ENCODE measurements at regions of chrX and their contacts with region 1.

Region 1: DNA sequence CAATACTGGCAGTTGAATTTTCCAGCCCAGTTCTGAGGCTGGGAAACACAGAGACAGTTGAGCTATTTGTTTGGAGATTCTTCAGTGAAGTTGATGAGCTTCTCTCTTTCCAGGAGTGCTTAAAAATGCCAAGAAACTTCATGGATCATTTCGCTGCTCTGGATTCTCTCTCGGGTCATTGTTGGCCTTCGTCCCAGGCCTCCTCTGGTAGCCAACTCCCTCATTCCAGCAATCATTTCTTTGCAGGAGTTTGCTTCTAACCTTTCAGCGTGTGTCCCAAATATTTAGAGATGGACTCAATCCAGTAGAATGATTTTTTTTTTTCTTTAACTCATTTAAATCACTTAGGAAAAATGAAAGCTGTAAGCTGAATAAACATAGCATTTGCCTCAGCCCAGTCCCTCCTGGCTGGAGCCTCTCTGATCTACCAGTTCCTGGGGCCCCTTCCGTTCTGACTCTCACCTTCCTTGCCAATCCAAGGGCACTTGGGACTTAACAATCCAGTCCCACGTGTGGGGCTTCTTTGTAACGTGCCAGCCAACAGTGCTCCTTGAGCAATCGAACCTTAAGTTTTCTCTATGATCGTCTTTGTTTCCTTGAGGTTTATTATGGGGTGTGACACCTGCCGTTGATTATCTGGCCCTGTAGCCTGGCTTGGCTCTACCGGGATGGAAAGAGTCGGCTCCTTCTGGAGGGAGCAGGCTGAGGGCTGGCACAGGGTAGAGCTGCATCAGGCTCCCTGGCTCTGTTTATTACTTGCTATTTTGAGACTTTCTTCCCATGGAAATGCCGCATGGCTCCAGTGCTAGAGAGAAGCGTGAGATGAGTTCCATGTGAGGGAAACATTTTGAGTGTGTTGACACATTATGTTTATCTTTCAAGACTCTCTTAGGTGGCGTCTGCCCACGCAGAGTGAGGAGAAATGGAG is 80.4 kb upstream of the GPC4 start:
- DNase-seq: peak; percentile 89
- H3K4me3 ChIP-seq: peak overlapping the region in 3 of 4 donors; percentile 5 to 23 (median 10)
- H3K27ac ChIP-seq: peak overlapping the region; percentile 72 to 79 (median 78)
- H3K4me1 ChIP-seq: peaks cover 0 to 29% (median 5%) of the 10 kb centered on the region in 4 donors
- H3K27me3 ChIP-seq: no peaks in the 10 kb centered on the region
- CTCF ChIP-seq: no peak
- EP300 ChIP-seq: no peak
- POLR2A ChIP-seq: no peak

Region 2: GRCh38 chrX:133249266-133250058 is 246.3 kb before region 1 on chrX:
- intact Hi-C with region 1: loop called (anchors 5 kb)
- DNase-seq: no peak
- H3K4me3 ChIP-seq: no peak overlapping the region
- H3K27ac ChIP-seq: peak overlapping the region in 3 of 4 donors; percentile 69
- H3K4me1 ChIP-seq: peaks cover 0 to 17% (median 6%) of the 10 kb centered on the region in 4 donors
- H3K27me3 ChIP-seq: no peaks in the 10 kb centered on the region
- CTCF ChIP-seq: no peak
- EP300 ChIP-seq: no peak
- POLR2A ChIP-seq: no peak

Region 3: GRCh38 chrX:133314281-133314680 is 181.4 kb before region 1 on chrX:
- intact Hi-C with region 1: loop called (anchors 5 kb)
- DNase-seq: no peak
- H3K4me3 ChIP-seq: no peak overlapping the region
- H3K27ac ChIP-seq: peak overlapping the region in 3 of 4 donors; percentile 42 to 53 (median 47)
- H3K4me1 ChIP-seq: peaks cover 0 to 23% (median 10%) of the 10 kb centered on the region in 4 donors
- H3K27me3 ChIP-seq: no peaks in the 10 kb centered on the region
- CTCF ChIP-seq: no peak
- EP300 ChIP-seq: no peak
- POLR2A ChIP-seq: no peak

Region 4: GRCh38 chrX:133325422-133325821 is 170.3 kb before region 1 on chrX:
- intact Hi-C with region 1: loop called (anchors 5 kb)
- DNase-seq: no peak
- H3K4me3 ChIP-seq: no peak overlapping the region
- H3K27ac ChIP-seq: peak overlapping the region; percentile 26 to 57 (median 29)
- H3K4me1 ChIP-seq: peaks cover 0 to 62% (median 22%) of the 10 kb centered on the region in 4 donors
- H3K27me3 ChIP-seq: no peaks in the 10 kb centered on the region
- CTCF ChIP-seq: no peak
- EP300 ChIP-seq: no peak
- POLR2A ChIP-seq: no peak

Region 5: DNA sequence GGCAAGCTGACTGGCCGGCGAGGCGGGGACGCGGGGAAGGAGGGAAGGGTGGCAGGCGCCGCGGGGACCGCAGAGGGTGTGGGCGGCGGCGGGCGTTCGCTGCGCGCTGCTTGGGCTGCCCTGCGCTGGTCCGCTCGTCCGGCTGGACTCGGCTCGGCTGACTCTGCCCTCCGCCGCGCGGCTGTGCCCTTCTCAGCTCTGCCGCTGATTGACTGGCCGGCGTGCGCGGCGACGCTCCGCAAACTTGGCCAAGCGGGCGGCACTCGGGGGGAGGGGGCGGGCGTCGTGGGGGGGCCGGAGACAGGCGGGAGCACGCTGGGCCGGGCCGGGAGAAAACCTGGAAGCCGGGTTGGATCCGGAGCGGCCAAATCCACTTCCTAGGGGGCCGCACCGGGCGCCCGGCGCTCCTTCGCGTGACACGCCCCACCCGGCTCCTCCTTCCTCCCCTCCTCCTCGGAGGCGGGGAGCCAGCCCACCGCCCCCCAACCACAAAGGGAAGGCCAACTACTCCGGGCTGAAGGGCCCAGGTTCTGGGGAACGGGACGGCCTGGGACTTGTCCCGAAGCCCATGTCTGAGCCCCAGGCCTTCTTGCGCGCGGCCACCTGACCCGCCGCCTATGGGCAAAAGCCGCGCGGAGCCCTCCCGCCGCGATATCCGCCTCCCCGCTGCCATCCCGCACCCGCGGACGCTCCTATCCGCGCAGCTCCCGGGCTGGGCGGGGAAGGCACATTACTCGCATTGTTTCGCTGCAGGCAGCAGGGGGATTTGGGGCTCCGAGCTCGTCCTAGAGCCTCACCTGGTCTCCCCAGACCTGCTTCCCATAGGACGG is 80.2 kb before region 1 on chrX and contains the start of gene GPC4:
- intact Hi-C with region 1: loop called (anchors 5 kb)
- DNase-seq: peak; percentile 91
- H3K4me3 ChIP-seq: peak within 1 kb of the TSS; percentile 68 to 77 (median 72)
- H3K27ac ChIP-seq: peak within 1 kb of the TSS; percentile 85 to 89 (median 87)
- H3K4me1 ChIP-seq: peaks cover 0 to 18% (median 9%) of the 10 kb centered on the region in 4 donors
- H3K27me3 ChIP-seq: peaks cover 0 to 4% (median 0%) of the 10 kb centered on the region in 3 donors
- CTCF ChIP-seq: no peak
- EP300 ChIP-seq: no peak
- POLR2A ChIP-seq: peak in 1 of 2 donors; percentile 44
- total RNA-seq, gene GPC4: 25.3 to 45.7 (median 28.1) TPM

Region 6: DNA sequence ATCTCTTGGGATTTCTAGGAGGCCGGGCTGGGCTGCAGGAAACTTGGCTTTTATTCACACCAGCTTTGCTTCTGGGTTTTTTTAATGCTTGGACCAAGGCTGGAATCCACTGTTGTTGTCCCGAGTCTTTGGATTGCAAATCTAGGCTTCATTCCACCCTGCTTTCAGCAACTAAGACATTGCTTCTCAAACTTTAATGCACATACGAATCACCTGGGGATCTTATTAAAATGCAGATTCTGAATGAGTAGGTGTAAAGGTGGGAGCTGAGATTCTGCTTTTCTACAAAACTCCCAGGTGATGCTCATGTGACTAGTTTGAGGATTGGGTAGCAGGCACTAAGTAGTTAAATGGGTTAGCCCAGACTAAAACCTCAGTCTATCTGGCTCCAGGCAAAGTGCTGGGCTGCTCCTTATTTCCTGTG is 41.2 kb before region 1 on chrX:
- intact Hi-C with region 1: no loop called
- DNase-seq: no peak
- H3K4me3 ChIP-seq: no peak overlapping the region
- H3K27ac ChIP-seq: no peak overlapping the region
- H3K4me1 ChIP-seq: no peaks in the 10 kb centered on the region
- H3K27me3 ChIP-seq: no peaks in the 10 kb centered on the region
- CTCF ChIP-seq: no peak
- EP300 ChIP-seq: no peak
- POLR2A ChIP-seq: no peak

Measured in sigmoid colon (tissue), 7 donors.